ENCODE measurements at regions of chr1 and their contacts with region 1.

Region 1: DNA sequence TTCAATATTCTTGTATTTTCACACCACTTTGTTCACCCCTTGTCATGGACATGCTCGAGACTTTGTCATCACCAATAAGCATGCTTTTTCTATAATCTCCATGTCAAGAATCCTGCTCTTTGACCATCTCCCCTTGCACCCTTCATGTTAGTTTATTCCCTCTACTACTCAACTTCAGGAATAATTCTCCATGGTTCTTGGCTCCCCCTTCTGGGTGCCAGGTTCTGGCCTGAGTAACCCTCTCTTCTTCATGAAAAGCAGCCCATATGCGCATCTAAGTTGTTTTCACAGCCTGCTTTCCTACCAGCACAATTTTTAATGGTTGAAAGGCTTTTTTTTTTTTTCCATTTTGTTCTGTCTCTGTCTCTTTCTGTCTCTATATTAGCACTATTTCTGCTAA is 160.7 kb downstream of the LEPR start:
- DNase-seq: peak in 1 of 4 experiments; percentile 30
- ATAC-seq: peak; percentile 69
- H3K4me3 ChIP-seq: no peak overlapping the region
- H3K27ac ChIP-seq: no peak overlapping the region
- H3K4me1 ChIP-seq: no peaks in the 10 kb centered on the region; a peak in 1 of 5 replicates
- H3K27me3 ChIP-seq: no peaks in the 10 kb centered on the region
- CTCF ChIP-seq: peak; percentile 21 to 57 (median 37); a peak in 3 of 6 replicates
- EP300 ChIP-seq: no peak
- POLR2A ChIP-seq: no peak
- RAD21 ChIP-seq: peak; percentile 63 to 75

Region 2: DNA sequence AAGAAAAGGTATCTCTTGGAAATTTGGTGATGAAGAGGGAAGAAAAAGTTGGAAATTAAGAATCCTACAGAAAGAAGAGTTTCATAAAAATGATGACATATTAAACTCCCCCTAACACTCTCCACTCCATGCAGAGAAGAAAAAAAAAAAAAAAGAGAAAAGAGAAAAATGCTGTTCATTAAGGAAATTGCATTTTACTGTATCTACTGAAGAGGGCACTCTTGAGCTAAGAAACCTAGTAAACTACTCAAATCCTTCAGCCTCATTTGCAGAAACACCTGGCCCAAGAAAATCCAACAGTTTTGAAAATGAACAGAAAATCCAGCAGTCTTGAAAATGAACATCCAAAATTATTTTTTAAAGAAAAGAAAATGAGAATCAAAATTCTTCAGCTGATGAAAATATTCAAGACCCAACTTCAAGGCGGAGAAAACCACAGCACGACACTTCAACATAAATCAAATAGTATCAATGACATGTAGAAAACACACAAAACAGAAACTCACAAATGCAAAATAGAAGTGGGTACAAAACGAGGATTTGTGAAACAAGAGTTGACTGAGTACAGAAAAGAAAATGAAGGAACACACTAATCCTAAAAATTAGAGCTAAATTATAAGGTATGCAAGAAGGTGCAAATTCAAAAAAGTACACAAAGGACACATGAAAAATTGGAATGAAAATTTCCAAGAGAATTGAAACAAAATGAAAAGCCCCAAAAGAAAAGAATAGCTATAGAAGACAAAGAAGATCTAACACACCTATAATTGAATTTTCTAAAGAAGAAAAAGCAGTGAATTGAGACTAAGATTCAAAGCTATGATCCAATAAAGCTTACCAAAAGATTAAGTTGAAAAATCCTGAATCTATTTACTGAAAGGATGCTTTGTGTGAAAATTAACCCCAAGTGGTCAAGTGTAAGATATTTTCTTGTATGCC is 345.0 kb before region 1 on chr1:
- CTCF ChIA-PET with region 1: no interaction called
- POLR2A ChIA-PET with region 1: no interaction called
- in situ Hi-C with region 1: no loop called
- intact Hi-C with region 1: loop called (anchors 10 kb)
- DNase-seq: peak in 3 of 4 experiments; percentile 24 to 81 (median 43)
- ATAC-seq: peak; percentile 5; the same call in 2 of the 3 replicates
- H3K4me3 ChIP-seq: no peak overlapping the region
- H3K27ac ChIP-seq: no peak overlapping the region
- H3K4me1 ChIP-seq: peaks cover 29 to 42% of the 10 kb centered on the region in 2 experiments; a peak in 4 of 5 replicates
- H3K27me3 ChIP-seq: no peaks in the 10 kb centered on the region
- CTCF ChIP-seq: peak; percentile 42 to 81 (median 70); a peak in 5 of 6 replicates
- EP300 ChIP-seq: no peak
- POLR2A ChIP-seq: no peak
- RAD21 ChIP-seq: peak; percentile 74 to 91

Region 3: DNA sequence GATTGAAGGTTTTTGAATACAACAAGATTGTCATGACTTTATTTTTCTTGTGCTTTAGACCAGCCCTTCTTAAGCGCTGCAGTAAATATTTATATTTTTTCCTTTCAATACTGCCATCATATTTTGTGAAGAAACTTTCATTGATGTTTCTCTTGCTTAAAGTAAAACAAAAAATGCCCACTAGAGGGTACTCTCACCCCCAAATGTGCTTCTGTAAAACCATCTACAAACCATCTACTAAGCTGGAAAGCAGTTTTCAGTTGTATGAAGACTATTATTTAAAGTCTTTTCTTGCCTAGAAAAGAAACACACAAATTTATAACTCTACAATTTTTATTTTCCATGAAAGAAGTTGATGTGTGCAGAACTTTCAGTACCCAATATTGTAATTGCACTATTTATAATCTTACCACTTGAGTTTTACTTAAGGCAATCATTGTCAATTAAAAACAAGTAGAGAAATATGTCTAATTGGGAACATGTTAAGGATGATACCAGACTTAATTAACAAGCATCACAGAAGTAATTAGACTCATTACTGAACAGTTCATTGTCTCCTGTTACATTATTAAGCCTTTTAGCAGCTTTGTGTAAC is 149.9 kb before region 1 on chr1:
- CTCF ChIA-PET with region 1: no interaction called
- POLR2A ChIA-PET with region 1: no interaction called
- in situ Hi-C with region 1: no loop called
- intact Hi-C with region 1: loop called (anchors 1 kb)
- DNase-seq: peak; percentile 31 to 65 (median 40)
- ATAC-seq: peak; percentile 63
- H3K4me3 ChIP-seq: no peak overlapping the region
- H3K27ac ChIP-seq: no peak overlapping the region
- H3K4me1 ChIP-seq: peaks cover 0 to 6% of the 10 kb centered on the region in 2 experiments; a peak in 3 of 5 replicates
- H3K27me3 ChIP-seq: no peaks in the 10 kb centered on the region
- CTCF ChIP-seq: peak; percentile 43 to 70 (median 50); a peak in 4 of 6 replicates
- EP300 ChIP-seq: no peak
- POLR2A ChIP-seq: no peak
- RAD21 ChIP-seq: peak; percentile 74 to 84

Measured in K562 (cell line).